A673 (cell line): ENCODE measurements at regions of chr18 and their contacts with region 1.

Region 1: DNA sequence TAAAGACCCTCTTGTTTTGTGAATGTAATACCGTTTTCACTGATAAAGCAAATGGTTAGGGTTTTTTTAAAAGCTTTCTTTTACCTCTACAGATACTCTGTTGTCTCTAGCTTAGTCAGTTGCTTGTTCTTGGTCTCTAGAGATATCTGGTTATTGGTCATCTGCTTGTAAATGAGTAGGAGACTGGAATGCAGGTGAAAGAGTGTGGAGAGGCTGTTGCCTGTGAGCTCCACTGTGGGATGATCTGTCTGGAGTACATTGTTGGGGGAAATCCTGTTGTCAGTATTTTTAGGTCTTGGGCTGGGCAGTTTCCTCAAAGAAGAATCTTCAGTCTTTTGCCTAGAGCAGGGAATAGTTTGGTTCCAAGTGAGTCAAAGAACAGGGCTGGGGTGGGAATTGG is 67.7 kb downstream of the SMCHD1 start:
- DNase-seq: no peak
- H3K4me3 ChIP-seq: no peak overlapping the region
- H3K27ac ChIP-seq: no peak overlapping the region
- H3K4me1 ChIP-seq: no peaks in the 10 kb centered on the region
- H3K27me3 ChIP-seq: no peaks in the 10 kb centered on the region
- CTCF ChIP-seq: no peak

Region 2: GRCh38 chr18:2746274-2746673 is 23.1 kb after region 1 on chr18:
- CTCF ChIA-PET with region 1: no interaction called
- POLR2A ChIA-PET with region 1: interaction called, 17 read pairs
- intact Hi-C with region 1: no loop called
- DNase-seq: no peak
- H3K4me3 ChIP-seq: no peak overlapping the region
- H3K27ac ChIP-seq: no peak overlapping the region
- H3K4me1 ChIP-seq: no peaks in the 10 kb centered on the region
- H3K27me3 ChIP-seq: no peaks in the 10 kb centered on the region
- CTCF ChIP-seq: no peak